ENCODE measurements at regions of chr13 and their contacts with region 1.

Region 1: GRCh38 chr13:27251166-27252091 is at the start of gene RPL21:
- DNase-seq: peak; percentile 94
- ATAC-seq: peak; percentile 94
- H3K4me3 Mint-ChIP-seq: peak within 1 kb of the TSS; percentile 97
- H3K27ac Mint-ChIP-seq: peak within 1 kb of the TSS; percentile 98
- H3K4me1 Mint-ChIP-seq: peaks cover 44% of the 10 kb centered on the region
- H3K27me3 Mint-ChIP-seq: no peaks in the 10 kb centered on the region
- total RNA-seq, gene RPL21: 756 to 1,682 TPM

Region 2: GRCh38 chr13:27171827-27172494 is 79.5 kb before region 1 on chr13:
- CTCF ChIA-PET with region 1: interaction called, 3 read pairs
- POLR2A ChIA-PET with region 1: interaction called, 4 read pairs
- intact Hi-C with region 1: loop called (anchors 1 kb)
- DNase-seq: peak; percentile 93
- ATAC-seq: peak; percentile 84
- H3K4me3 Mint-ChIP-seq: peak overlapping the region; percentile 70
- H3K27ac Mint-ChIP-seq: peak overlapping the region; percentile 88
- H3K4me1 Mint-ChIP-seq: peaks cover 60% of the 10 kb centered on the region
- H3K27me3 Mint-ChIP-seq: no peaks in the 10 kb centered on the region

Region 3: GRCh38 chr13:27211771-27212364 is 39.6 kb before region 1 on chr13:
- CTCF ChIA-PET with region 1: no interaction called
- POLR2A ChIA-PET with region 1: no interaction called
- intact Hi-C with region 1: no loop called
- DNase-seq: no peak
- ATAC-seq: peak; percentile 36
- H3K4me3 Mint-ChIP-seq: no peak overlapping the region
- H3K27ac Mint-ChIP-seq: no peak overlapping the region
- H3K4me1 Mint-ChIP-seq: no peaks in the 10 kb centered on the region
- H3K27me3 Mint-ChIP-seq: no peaks in the 10 kb centered on the region

Region 4: GRCh38 chr13:27353166-27353583 is 101.7 kb after region 1 on chr13:
- CTCF ChIA-PET with region 1: no interaction called
- POLR2A ChIA-PET with region 1: interaction called, 4 read pairs
- intact Hi-C with region 1: loop called (anchors 1 kb)
- DNase-seq: peak; percentile 71
- ATAC-seq: peak; percentile 98
- H3K4me3 Mint-ChIP-seq: peak overlapping the region; percentile 48
- H3K27ac Mint-ChIP-seq: peak overlapping the region; percentile 58
- H3K4me1 Mint-ChIP-seq: peaks cover 19% of the 10 kb centered on the region
- H3K27me3 Mint-ChIP-seq: peaks cover 11% of the 10 kb centered on the region

Region 5: DNA sequence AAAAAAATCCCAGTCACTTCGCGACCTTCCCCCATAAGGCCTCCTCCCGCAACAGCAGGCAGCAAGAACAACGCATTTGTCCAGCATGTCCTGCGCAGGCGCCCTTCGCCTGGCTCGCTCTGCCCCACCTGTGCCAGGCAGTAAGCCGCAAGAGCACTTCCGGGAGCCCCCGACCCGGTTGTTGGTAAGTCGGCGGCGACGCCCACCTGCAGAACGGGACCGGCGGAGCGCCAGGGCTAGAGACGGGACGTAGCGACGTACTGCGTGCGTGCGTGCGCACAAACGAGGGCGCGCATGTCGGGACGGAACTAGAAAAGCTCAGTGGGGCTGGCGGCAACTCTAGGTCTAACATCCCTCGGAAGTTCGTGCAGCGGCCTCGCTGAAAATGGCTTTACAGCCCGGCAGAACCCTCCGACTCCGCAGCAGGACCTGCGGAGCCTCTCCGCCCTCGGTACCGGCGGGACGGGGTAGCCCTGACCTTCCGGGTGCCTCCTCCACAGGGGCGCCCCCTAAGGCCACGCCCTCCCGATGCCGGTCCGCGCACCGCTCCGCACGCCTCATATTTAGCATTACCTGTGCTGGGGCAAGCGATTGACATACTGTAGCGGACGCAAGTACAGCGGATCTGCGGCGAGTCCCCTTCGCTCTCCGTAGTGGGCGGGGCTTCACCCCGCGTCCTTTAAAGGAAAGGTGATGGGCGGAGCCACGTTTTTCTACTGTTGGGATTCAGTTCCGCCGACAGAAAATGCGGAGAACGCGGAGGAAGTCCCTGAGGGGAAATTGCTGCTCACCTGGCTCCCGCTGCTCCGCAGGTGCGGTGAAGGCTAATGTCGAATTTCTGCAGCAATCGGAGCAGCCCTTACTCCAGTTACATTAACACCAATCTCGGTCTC is 198.8 kb after region 1 on chr13 and contains the start of gene MTIF3:
- CTCF ChIA-PET with region 1: no interaction called
- POLR2A ChIA-PET with region 1: no interaction called
- intact Hi-C with region 1: loop called in 1 of 2 experiments (anchors 1 kb)
- DNase-seq: peak; percentile 98
- ATAC-seq: peak; percentile 86
- H3K4me3 Mint-ChIP-seq: peak within 1 kb of the TSS; percentile 89
- H3K27ac Mint-ChIP-seq: peak within 1 kb of the TSS; percentile 99
- H3K4me1 Mint-ChIP-seq: peaks cover 53% of the 10 kb centered on the region
- H3K27me3 Mint-ChIP-seq: no peaks in the 10 kb centered on the region
- total RNA-seq, gene MTIF3: 27.5 to 43.0 TPM

Region 6: DNA sequence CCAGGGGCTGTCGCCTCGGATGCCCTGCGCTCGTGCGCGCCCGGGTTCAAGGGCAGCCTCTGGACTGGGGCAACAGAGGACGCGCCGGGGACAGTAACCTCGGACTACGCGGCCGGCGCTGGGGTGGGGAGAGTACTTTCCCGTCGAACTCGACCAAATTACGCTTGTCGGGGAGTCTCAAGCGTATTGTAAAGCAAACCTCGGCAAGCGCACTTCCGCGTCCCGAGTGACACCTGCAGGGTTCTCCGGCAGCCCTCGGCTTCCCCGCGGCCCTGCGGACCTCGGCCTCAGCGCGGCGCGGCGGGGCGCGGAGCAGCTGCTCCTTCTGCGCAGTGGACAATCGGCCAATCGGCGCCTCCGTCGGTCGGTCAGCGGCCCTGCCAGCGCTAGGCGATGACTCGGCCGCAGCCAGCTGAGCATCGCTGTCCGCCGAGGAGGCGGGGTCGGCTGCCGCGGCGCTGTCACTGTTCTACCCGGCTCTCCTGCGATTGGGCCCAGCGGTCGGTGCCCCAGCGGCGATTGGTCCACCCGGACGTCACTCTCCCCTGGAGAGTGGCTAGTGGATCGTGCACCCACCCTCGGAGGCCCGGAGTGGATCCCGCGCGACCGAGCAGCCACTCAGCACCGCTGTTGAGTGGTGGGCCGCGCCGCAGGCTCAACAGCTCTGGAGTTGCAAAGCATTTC is 1467.3 kb after region 1 on chr13 and contains the start of gene SLC46A3:
- CTCF ChIA-PET with region 1: no interaction called
- POLR2A ChIA-PET with region 1: no interaction called
- intact Hi-C with region 1: loop called in 1 of 2 experiments (anchors 2 kb)
- DNase-seq: peak; percentile 97
- ATAC-seq: peak; percentile 100
- H3K4me3 Mint-ChIP-seq: peak within 1 kb of the TSS; percentile 84
- H3K27ac Mint-ChIP-seq: peak within 1 kb of the TSS; percentile 94
- H3K4me1 Mint-ChIP-seq: peaks cover 23% of the 10 kb centered on the region
- H3K27me3 Mint-ChIP-seq: no peaks in the 10 kb centered on the region
- total RNA-seq, gene SLC46A3: 2.8 to 3.2 TPM

Measured in activated CD4-positive, alpha-beta T cell treated with anti-CD3 and anti-CD28 coated beads for 36 hours (primary cell).